GM10248 (cell line): ENCODE measurements at regions of chr17 and their contacts with region 1.

Region 1: DNA sequence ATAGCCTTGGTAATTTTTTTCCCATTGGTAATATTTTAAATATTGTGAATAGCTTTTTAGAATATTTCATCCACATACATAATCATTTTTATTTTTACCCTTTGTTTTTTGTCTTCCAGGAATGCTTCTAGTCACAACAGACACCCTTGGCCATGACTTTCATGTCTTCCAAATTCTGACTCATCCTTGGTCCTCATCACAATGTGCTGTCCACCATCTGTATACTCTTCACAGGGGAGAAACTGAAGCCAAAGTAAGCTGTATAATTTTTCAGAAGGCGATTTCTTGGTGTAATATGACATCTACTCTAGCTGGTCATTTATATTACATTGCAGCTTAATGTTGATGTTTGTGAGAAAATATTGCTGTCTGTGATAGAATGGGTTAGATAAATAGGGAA is 269.4 kb downstream of the BCAS3 start:
- DNase-seq: no peak
- CTCF ChIP-seq: no peak

Region 2: GRCh38 chr17:61088553-61088952 is 141.5 kb after region 1 on chr17:
- CTCF ChIA-PET with region 1: no interaction called
- POLR2A ChIA-PET with region 1: interaction called, 11 read pairs
- DNase-seq: no peak
- CTCF ChIP-seq: no peak